Cardiac septum (tissue), 1 donor: ENCODE measurements at regions of chr6 and their contacts with region 1.

Region 1: DNA sequence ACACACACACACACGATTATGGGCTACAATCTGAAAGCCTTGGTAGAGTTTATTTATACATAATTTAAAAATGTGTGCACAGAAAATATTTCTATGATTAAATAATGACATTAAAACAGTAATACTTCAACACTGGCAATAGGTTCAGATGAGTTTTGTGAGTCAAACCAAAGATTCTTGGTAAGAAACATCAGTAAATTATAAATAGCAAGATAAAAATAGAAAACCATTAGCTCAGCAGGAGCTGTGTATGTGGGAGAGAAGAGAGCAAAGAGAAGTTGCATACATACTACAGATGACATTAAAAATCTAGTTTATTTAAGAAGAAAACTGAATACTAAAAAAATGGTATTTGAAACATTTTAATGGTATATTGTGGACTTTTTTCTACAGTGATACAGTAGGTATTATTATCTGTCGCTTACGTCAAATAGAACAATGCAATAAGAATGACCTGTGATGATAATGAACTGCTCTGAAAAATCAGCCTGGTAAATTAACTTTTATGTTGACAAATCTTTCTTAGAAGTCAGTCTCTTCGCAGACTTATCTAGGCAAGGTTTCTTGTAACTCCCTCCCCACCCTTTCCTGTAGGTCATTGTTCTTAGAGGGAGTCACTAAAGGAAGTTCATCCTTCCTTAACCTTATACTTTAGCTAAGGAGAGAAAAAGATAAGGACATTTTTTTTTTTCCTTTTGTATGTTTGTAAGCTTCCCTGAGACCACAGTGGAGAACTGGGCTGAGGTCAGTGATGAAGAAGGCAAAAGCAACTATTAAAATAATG is 149.3 kb downstream of the GJA1 start:
- DNase-seq: no peak

Region 2: GRCh38 chr6:121236984-121237383 is 347.8 kb before region 1 on chr6:
- intact Hi-C with region 1: no loop called
- DNase-seq: no peak

Region 3: DNA sequence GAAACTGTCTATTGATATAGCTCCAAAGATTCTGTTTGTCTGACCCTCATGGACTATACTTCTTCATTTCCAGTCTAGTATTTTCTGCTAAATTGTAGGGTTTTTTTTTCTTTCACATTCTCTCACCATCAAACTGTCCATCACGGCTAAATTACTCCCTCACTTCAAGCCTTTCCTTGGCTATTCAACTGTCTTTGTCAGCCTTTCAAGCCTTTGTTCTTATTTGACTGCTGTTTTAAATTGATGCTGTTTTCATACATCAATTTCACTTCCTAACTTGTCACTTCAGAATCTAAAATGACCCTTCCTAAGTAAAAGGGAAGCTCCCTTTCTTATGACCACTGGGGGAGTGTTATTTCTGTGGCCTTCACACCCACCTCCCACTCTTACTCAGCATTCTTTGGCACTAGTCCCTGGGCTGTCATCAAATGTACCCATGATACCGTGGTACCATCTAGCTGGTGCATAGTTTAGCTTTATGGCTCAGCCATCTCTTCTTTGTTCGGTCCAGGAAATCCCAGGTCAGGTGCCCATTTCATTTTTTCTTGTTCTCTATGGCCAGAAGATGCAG is 140.7 kb before region 1 on chr6:
- intact Hi-C with region 1: loop called (anchors 2 kb)
- DNase-seq: no peak

Region 4: DNA sequence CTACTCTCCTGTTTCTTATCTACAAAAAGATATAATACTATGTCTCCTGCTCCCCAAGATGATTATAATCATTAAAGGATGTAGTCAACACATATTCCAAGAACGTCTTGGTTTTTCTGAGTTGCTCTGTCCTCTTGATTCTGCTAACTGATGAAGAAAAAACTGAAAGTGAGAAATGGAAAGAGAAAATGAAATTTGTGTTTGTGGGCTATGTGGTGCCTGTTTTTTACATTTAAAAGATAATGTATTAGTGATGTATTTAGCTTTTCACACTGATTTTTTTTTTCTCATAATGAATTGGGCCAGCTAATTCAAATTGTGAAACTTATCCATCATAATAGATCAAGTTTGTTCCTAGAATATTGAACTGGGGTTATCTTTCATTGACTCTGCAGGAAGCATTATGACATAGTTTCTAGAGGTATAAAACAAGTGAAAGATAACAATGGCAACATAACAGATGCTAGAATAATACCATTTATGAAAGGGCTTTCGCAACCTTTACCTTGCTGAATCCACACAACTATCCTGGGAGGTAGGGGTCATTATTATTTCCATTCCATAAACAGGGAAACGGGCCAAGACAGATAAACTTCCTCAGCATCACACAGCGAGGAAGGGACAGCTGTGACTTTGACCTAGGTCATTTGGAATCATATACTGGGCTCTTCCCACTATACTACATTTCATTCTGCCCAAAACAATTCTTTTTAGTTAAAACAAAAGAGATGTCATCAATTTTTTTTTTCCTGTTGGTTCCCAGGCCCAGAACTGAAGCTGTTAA is 187.4 kb after region 1 on chr6:
- intact Hi-C with region 1: loop called (anchors 10 kb)
- DNase-seq: no peak